ENCODE measurements at regions of chr6 and their contacts with region 1.

Region 1: GRCh38 chr6:3732345-3733141 is 19.0 kb downstream of the PXDC1 start:
- DNase-seq: peak; percentile 83
- ATAC-seq: peak; percentile 91
- H3K4me3 Mint-ChIP-seq: no peak overlapping the region
- H3K27ac Mint-ChIP-seq: no peak overlapping the region
- H3K4me1 Mint-ChIP-seq: peaks cover 17% of the 10 kb centered on the region
- H3K27me3 Mint-ChIP-seq: no peaks in the 10 kb centered on the region
- CTCF ChIP-seq: peak; percentile 71

Region 2: GRCh38 chr6:3281631-3282475 is 450.7 kb before region 1 on chr6:
- CTCF ChIA-PET with region 1: interaction called, 22 read pairs
- POLR2A ChIA-PET with region 1: no interaction called
- DNase-seq: peak; percentile 16
- ATAC-seq: peak; percentile 12
- H3K4me3 Mint-ChIP-seq: no peak overlapping the region
- H3K27ac Mint-ChIP-seq: peak overlapping the region; percentile 92
- H3K4me1 Mint-ChIP-seq: peaks cover 25% of the 10 kb centered on the region
- H3K27me3 Mint-ChIP-seq: no peaks in the 10 kb centered on the region
- CTCF ChIP-seq: no peak

Region 3: DNA sequence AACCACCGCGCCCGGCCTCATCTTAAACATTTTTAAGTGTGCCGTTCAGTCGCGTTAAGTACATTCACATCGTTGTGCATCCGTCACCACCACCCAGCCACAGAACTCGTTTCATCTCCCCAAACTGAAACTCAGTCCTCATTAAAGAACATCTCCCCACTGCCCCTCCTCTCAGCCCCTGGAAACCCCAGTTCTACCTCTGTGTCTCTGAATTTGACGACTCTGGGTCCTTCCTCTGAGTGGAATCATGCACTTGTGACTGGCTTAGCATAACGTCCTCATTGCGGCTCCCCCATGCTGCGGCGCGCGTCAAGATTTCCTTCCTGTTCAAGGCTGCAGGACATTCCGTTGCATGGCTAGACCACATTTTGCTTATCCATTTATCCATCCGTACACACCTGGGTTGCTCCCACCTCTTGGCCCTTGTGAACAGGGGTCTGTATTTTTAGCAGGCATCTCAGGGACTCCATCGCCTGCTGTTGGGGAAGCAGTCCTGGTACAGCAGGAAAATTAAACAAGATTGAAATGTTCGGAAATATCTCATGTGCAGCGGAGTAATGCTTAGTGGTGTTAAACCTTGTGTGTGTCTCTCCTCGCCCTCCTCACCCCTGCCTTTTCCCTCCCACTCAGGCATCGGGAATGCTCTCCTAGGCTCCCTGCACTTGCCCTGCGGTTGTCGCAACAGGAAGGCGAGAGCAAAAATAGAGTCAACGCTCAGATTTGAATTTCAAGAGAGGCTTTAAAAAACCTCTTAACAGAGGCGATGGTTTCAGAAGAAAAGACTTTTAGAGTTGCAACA is 108.9 kb before region 1 on chr6:
- CTCF ChIA-PET with region 1: interaction called, 11 read pairs
- POLR2A ChIA-PET with region 1: no interaction called
- DNase-seq: no peak
- ATAC-seq: no peak
- H3K4me3 Mint-ChIP-seq: no peak overlapping the region
- H3K27ac Mint-ChIP-seq: no peak overlapping the region
- H3K4me1 Mint-ChIP-seq: peaks cover 45% of the 10 kb centered on the region
- H3K27me3 Mint-ChIP-seq: peaks cover 11% of the 10 kb centered on the region
- CTCF ChIP-seq: no peak

Region 4: DNA sequence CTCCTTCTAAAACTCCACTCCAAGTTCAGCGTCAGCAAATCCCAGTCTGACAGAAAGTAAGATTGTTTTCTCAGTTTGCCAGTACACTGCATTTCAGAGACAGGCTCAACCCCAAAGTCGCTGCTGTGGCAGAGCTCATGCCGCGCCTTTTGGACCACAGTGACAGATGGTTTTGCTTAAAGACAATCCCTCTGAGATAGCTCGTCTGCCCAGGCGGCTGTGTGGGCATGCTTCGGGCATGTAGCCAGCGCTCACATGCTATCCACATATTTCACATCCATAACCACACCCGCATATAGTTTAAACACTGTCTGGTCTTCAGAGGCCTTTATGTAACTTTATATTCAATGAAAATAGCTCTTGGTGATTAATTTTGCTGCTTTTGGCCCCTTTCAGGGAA is 33.7 kb after region 1 on chr6:
- CTCF ChIA-PET with region 1: no interaction called
- POLR2A ChIA-PET with region 1: no interaction called
- DNase-seq: no peak
- ATAC-seq: no peak
- H3K4me3 Mint-ChIP-seq: no peak overlapping the region
- H3K27ac Mint-ChIP-seq: no peak overlapping the region
- H3K4me1 Mint-ChIP-seq: peaks cover 25% of the 10 kb centered on the region
- H3K27me3 Mint-ChIP-seq: no peaks in the 10 kb centered on the region
- CTCF ChIP-seq: no peak